Activated CD8-positive, alpha-beta T cell treated with anti-CD3 and anti-CD28 coated beads, Interleukin-2, amount 10 ng/mL, durations not matched to agents 7 days and 5 days (primary cell): ENCODE measurements at regions of chr19 and their contacts with region 1.

Region 1: GRCh38 chr19:3821857-3822364 is 35.7 kb upstream of the MATK start:
- DNase-seq: peak; percentile 93
- ATAC-seq: peak; percentile 95
- H3K4me3 Mint-ChIP-seq: no peak overlapping the region
- H3K27ac Mint-ChIP-seq: peak overlapping the region; percentile 76
- H3K4me1 Mint-ChIP-seq: peaks cover 33% of the 10 kb centered on the region
- H3K27me3 Mint-ChIP-seq: no peaks in the 10 kb centered on the region

Region 2: GRCh38 chr19:3626473-3627350 is 195.2 kb before region 1 on chr19 and contains the start of gene CACTIN:
- CTCF ChIA-PET with region 1: no interaction called
- POLR2A ChIA-PET with region 1: no interaction called
- DNase-seq: peak; percentile 99
- ATAC-seq: peak; percentile 97
- H3K4me3 Mint-ChIP-seq: peak within 1 kb of the TSS; percentile 82
- H3K27ac Mint-ChIP-seq: peak within 1 kb of the TSS; percentile 99
- H3K4me1 Mint-ChIP-seq: peaks cover 32% of the 10 kb centered on the region
- H3K27me3 Mint-ChIP-seq: no peaks in the 10 kb centered on the region
- total RNA-seq, gene CACTIN: 31.2 to 37.0 TPM

Region 3: DNA sequence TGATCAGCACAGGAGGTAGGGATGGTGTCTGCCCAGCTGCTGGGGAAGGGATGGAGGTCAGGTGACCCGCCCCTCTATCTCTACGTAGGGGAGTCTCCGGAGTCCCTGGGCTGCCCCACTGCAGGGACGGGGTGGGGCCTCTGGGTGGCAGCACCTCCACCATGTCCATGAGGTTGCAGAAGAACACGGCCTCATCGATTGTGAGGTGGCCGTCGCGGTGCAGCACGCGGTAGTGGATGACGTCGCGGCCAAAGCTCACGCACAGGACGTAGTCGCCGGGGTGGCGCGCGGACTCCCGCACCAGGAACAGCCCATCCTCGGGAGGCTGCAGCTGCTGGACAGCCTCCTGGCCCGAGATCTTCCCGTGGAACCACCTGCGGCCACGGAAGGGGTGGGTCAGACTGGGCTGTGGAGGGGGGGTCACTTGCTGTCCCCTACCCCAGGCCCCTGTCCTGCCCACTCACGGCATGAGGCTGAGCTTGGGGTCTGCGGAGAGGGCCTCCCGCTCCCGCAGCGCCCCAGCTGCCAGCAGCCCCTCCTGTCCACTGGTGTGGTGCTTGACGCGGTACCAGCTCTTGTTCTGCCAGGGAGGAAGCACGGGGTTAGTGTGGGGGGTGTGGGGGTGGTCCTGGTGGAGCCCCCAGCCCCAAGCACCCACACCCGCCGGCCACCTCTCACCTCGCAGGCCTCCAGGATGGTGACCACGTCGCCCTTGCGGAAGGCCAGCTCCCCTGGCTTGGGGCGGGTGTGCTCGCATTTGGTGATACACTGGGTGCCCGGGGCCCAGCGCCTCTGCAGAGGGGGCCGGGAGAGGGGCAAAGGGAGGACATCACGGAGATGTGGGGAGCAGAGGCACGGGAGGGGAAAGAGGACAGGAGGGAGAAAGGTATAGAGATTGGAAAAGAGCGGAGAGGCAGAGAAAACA is 38.0 kb before region 1 on chr19:
- CTCF ChIA-PET with region 1: interaction called, 10 read pairs
- POLR2A ChIA-PET with region 1: no interaction called
- DNase-seq: peak; percentile 44
- ATAC-seq: no peak
- H3K4me3 Mint-ChIP-seq: peak overlapping the region; percentile 8
- H3K27ac Mint-ChIP-seq: no peak overlapping the region
- H3K4me1 Mint-ChIP-seq: peaks cover 28% of the 10 kb centered on the region
- H3K27me3 Mint-ChIP-seq: no peaks in the 10 kb centered on the region